Posterior vena cava (tissue), 2 donors: ENCODE measurements at regions of chr16 and their contacts with region 1.

Region 1: GRCh38 chr16:12971241-12971640 is 69.8 kb downstream of the SHISA9 start:
- DNase-seq: no peak

Region 2: DNA sequence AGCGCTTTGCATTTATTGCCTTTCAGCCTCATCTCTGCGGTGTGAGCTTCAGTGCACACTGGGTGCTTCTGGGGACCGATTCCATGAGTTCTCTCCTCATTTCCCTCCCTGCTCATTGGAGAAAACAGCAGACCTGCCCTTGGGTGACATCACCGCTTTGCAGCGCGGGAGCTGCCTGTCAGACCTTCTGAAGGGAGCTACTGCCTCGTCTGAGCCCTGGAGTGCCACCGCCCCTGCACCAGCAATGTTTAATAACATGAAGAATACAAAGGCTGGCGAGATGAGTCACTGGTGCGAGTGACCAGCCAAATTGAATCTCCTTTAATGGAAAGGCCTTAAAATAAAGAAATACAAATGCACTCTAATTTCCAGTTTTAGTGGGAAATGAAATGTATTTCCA is 137.3 kb before region 1 on chr16:
- intact Hi-C with region 1: no loop called
- DNase-seq: no peak

Region 3: GRCh38 chr16:12951392-12951791 is 19.8 kb before region 1 on chr16:
- intact Hi-C with region 1: no loop called
- DNase-seq: no peak

Region 4: DNA sequence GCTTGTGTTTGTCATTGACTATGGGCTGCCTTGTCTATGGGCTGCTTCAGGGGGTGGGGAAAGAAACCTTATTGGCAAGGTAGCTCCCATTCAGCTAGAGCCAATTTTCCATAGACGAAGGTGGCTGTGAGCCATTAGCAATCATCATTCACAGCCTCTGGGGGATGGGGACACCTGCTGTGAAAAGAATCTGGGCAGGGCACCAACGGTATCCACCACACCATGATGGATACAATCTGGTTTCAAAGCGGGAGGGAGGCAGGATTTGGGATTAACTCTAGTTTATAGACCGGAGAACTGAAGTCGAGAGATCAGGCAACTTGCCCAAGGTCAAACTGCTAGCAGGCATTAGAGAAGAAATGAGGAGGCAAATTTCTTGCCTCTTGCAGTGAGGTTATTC is 112.4 kb after region 1 on chr16:
- intact Hi-C with region 1: loop called in 1 of 2 experiments (anchors 5 kb)
- DNase-seq: no peak